ENCODE measurements at regions of chr2 and their contacts with region 1.

Region 1: DNA sequence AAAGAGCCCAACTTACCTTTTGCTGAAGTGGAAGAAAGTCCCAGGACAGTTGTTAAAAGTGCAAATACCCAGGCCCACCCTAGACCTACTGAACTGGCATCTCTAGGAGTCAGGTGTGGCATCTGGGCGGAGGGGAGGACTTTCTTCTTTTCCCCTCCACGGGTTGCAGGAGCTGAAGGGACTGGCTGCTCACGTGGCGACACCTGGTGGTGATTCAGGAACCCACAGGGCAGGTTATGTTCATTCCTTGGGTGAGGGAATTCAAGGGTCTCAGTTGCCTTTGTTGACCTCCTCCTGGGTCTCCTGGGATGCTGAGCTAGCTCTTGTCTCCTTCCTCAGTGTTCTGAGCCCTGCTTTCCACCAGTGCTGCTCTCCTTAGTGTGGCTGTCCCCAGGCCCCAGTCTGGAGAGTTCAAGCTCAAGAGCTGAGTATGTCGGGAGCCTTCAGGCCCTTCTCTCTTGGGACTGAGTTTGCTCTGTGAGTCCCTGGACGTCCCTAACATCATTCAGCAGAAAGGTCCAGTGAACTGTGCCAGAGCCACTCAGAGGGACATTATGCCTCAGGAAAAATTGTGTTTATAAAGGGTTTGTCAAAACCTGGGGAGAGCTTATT is 56.9 kb downstream of the DYSF start:
- DNase-seq: peak; percentile 90

Region 2: GRCh38 chr2:71226965-71227560 is 283.2 kb before region 1 on chr2 and contains the start of gene PAIP2B:
- intact Hi-C with region 1: no loop called
- DNase-seq: peak; percentile 99
- total RNA-seq, gene PAIP2B: 2.8 to 3.8 TPM

Region 3: GRCh38 chr2:71299507-71299906 is 210.8 kb before region 1 on chr2:
- intact Hi-C with region 1: loop called (anchors 5 kb)
- DNase-seq: no peak

Region 4: DNA sequence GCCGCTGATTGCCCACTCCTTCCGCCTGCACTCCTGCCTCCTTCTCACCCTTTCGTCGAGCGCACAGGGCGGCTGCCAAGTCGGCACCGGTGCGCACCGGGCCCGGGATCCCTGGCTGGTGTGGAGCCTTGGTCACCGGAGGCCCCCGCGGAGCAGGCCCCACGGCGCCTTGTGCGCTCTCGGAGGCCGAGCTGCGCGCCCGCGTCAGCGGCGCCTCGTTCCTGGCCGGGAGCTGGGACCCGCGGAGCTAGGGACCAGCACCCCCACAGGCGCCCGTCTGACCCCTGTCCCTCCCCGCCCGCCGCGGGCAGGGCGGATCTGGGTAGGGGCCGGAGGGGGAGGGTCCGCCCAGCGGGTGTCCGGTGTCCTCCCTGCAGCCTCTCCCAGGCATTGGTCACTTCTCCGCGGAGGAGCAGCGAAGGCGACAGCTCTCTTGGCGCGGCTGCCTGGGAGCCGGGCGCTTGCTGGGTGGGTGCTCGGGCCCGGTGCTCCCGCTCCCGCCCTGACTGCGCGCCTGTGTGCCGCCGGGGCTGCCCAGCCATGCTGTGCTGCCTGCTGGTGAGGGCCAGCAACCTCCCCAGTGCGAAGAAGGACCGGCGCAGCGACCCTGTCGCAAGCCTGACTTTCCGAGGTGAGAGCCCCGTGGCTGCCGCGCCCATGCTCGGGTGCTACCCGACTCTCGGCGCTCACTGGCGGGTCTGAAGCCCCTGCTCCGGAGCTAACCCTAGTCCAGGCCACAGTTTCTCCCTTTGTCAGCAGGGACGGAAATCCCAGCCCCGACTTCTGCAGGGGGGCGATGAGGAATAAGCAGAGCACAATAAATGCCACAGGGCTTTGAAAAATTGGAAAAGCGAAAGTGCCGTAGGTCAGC is 43.8 kb before region 1 on chr2:
- intact Hi-C with region 1: loop called (anchors 2 to 5 kb)
- DNase-seq: no peak